ENCODE measurements at regions of chr12 and their contacts with region 1.

Region 1: GRCh38 chr12:89709157-89709994 is 738 bp upstream of the ATP2B1 start:
- DNase-seq: peak; percentile 97 to 100
- ATAC-seq: peak; percentile 79 to 87
- H3K4me3 ChIP-seq: peak overlapping the region; percentile 91
- H3K27ac ChIP-seq: peak overlapping the region; percentile 85 to 98
- H3K4me1 ChIP-seq: peaks cover 27% of the 10 kb centered on the region
- CTCF ChIP-seq: no peak
- EP300 ChIP-seq: no peak; a peak in 1 of 5 replicates
- POLR2A ChIP-seq: peak; percentile 89
- RAD21 ChIP-seq: no peak; a peak in 2 of 5 replicates

Region 2: DNA sequence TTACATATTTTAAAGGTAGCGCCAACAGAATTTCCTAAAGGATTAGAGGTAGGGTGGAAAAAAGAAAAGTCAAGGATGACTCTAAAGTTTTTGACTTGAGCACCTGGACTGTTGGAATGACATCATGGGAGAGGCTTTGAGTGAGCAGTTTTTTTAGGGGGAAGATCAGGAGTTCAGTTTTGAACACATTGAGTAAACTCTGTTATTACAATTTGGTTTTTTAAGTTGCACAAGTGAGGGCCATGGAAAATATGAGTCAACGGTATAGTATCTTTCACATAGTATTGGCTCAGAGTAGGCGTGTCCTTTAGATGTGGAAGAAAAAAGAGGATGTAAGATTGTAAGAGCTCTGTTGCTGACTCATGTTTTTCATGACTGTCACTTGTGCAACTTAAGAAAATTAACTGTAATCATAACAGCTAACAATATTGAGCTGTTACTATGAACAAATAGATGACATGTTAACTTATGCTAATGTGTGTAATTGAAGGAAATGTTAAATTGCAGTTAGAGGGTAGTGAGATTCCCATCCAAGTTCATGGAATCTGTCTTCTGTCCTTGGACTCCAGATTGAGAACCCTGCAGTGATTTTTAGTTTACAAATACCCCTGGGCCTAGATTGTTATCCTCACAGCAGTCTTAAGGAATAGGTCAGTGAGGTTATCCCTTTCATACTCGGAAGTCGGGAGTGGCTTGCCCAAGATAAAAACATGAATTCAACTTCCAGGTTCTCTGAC is 47.4 kb after region 1 on chr12:
- CTCF ChIA-PET with region 1: no interaction called
- POLR2A ChIA-PET with region 1: interaction called, 28 read pairs
- DNase-seq: peak; percentile 76 to 95
- ATAC-seq: peak; percentile 92
- H3K4me3 ChIP-seq: no peak overlapping the region
- H3K27ac ChIP-seq: peak overlapping the region; percentile 77 to 85
- H3K4me1 ChIP-seq: peaks cover 24% of the 10 kb centered on the region
- CTCF ChIP-seq: no peak
- EP300 ChIP-seq: peak; percentile 50 to 78; a peak in 3 of 5 replicates
- POLR2A ChIP-seq: no peak
- RAD21 ChIP-seq: peak; percentile 6 to 44; a peak in 4 of 5 replicates

Region 3: DNA sequence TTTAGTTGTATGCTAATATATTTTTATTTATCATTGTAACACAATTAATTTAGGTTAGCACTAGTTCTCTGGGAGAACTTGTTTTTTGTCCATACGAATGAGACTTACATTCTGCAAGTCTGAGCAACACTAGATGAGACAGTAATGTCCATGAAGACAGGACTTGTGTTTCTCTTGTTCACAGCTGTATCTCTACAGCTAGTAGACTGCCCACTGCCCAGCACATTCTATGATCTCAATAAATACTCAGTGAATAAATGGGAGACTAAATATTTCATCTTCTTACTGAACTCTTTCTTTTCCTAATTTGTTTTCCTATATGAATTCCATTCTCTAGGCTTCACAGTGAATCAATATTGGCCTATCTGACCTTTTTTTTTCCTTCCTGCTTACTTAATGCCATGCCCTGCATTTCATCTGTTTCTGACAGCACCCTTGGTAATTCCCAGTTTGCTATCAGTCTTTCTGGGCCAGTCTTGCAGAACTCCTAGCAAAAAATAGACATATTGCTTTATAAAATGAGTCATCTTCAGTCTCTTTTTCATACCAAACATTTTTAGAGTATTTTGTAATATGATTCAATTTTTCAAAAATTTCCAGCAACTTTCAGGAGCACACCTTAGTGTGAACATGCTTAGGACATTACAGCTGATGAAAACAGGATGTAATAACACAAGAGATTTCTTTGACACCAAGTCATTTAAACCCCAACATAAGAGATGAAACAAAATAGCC is 184.8 kb after region 1 on chr12:
- CTCF ChIA-PET with region 1: no interaction called
- POLR2A ChIA-PET with region 1: interaction called, 10 read pairs
- DNase-seq: peak in 1 of 2 experiments; percentile 46
- ATAC-seq: peak; percentile 88
- H3K4me3 ChIP-seq: no peak overlapping the region
- H3K27ac ChIP-seq: peak overlapping the region; percentile 72 to 76
- H3K4me1 ChIP-seq: peaks cover 24% of the 10 kb centered on the region
- CTCF ChIP-seq: no peak
- EP300 ChIP-seq: peak; percentile 81 to 87; a peak in 3 of 5 replicates
- POLR2A ChIP-seq: no peak
- RAD21 ChIP-seq: peak in 1 of 2 experiments; percentile 7; a peak in 1 of 5 replicates

Region 4: GRCh38 chr12:89949457-89950195 is 240.2 kb after region 1 on chr12:
- CTCF ChIA-PET with region 1: interaction called, 7 read pairs
- POLR2A ChIA-PET with region 1: interaction called, 103 read pairs
- DNase-seq: peak; percentile 71 to 98
- ATAC-seq: peak; percentile 85 to 87
- H3K4me3 ChIP-seq: peak overlapping the region; percentile 10; the same call in 1 of the 3 replicates
- H3K27ac ChIP-seq: peak overlapping the region; percentile 85 to 94
- H3K4me1 ChIP-seq: peaks cover 51% of the 10 kb centered on the region
- CTCF ChIP-seq: peak; percentile 35; the same call in 2 of the 3 replicates
- EP300 ChIP-seq: peak; percentile 50 to 95; a peak in 4 of 5 replicates
- POLR2A ChIP-seq: no peak
- RAD21 ChIP-seq: peak; percentile 34 to 65